ENCODE measurements at regions of chr3 and their contacts with region 1.

Region 1: DNA sequence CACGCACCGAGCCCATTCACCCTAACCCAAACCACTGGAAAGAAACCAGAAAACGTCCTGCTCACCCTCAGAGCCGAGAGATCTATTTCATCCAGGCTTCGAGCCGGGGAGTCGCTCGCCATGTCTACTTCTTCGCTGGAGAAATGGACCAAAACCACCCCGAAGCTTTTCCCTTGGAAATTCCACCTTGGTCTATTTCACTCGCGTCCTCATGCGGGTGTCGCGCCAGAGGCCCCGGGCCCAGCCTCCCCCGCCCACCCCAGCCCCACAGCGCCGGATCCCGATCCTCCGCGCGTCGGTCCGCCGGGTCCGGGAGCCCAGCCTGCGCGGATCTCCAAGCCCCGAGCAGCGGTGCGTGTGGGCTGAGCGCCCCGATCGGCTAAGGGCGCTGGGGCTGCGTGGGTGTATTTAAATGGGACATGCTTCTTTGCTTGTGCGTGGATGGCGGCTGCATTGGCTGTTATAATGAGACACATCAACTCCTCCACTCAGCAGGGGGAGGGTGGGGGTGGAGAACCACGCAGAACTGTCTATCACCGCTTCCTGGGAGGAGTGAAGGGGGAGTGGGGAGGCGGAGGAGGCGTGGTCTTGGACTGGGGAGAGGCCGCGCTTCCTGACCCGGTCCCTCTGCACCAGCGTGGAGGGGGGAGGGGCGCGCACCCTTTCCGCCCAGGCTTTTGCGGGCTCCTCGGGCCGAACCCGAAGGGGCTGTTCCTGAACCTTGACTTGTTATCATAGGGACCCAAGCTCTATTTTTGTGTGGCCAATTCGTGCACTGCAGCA is at the start of gene TNIK:
- DNase-seq: peak; percentile 97
- H3K4me3 Mint-ChIP-seq: peak within 1 kb of the TSS; percentile 95
- H3K27ac Mint-ChIP-seq: peak within 1 kb of the TSS; percentile 94
- H3K4me1 Mint-ChIP-seq: peaks cover 46% of the 10 kb centered on the region
- H3K27me3 Mint-ChIP-seq: no peaks in the 10 kb centered on the region
- total RNA-seq, gene TNIK: 55.2 to 56.9 TPM

Region 2: DNA sequence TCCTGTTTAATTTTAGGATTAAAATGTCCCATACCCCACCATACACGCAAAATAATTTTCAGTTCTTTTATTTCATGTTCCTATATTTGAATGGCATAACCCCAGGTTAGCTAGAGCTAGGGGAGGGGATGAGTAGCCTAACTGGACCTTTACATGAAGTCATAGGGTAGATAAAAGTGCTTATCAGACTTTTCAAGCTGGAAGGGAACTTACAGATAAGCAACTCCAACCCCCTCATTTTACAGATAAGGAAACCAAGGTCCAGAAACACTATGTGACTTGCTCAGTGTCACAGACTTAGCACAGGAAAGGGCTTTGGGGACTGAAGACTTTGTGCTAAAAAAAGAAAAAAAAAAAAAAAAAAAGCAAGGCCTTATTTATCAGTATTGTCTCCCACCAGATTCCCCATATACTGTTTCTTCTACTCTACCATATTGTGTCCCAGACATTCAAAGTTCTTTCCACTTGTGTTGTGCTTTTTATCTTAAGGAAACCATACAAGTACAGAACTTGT is 10.6 kb after region 1 on chr3:
- CTCF ChIA-PET with region 1: interaction called, 10 read pairs
- POLR2A ChIA-PET with region 1: no interaction called
- DNase-seq: no peak
- H3K4me3 Mint-ChIP-seq: no peak overlapping the region
- H3K27ac Mint-ChIP-seq: no peak overlapping the region
- H3K4me1 Mint-ChIP-seq: no peaks in the 10 kb centered on the region
- H3K27me3 Mint-ChIP-seq: no peaks in the 10 kb centered on the region